CD4-positive, alpha-beta T cell (primary cell): ENCODE measurements at regions of chr2 and their contacts with region 1.

Region 1: DNA sequence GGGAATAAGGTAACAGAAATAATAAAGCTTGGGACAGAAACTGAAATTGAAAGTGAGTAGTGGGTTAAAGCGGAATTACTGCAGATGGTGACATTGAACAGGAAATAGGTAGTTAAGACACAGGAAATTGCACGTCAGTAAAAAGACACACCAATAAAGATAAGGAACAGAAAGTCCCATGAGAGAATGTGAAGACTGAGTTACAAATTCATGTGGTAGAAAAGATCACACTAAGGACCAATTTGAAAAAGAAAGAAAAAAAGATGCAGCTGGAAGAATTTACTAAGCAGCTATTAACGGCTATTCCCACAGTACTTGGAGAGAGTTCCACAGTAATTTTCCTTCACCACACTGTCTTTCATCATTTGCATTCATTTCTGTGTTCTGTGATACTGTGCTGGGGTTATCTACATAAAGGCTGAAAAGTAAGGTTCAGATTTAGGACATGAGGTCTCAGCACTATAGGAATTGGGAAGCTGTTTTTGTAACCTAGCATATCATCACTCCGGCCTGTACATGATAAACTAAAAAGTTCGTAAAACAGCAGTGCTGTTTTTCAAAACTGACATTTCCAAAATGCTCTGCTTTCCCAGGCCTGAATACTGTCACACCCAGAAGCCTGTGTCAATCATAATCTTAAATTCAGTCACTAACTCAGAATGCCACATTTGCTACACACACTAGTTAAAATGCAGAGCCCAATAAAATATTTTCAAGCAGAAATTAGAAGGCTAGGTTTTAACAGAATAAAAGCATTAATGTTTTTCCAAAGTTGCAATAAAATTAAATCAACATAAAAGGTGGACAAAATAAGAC is 42.9 kb downstream of the SRBD1 start:
- DNase-seq: peak in 4 of 14 experiments; percentile 7 to 91 (median 86)
- ATAC-seq: peak; percentile 97
- H3K4me3 ChIP-seq: peak overlapping the region; percentile 55
- H3K4me3 Mint-ChIP-seq: peak overlapping the region; percentile 87
- H3K27ac ChIP-seq: peak overlapping the region; percentile 58 to 85
- H3K27ac Mint-ChIP-seq: peak overlapping the region; percentile 87
- H3K4me1 ChIP-seq: peaks cover 12% of the 10 kb centered on the region
- H3K4me1 Mint-ChIP-seq: peaks cover 47% of the 10 kb centered on the region
- H3K27me3 ChIP-seq: no peaks in the 10 kb centered on the region
- H3K27me3 Mint-ChIP-seq: no peaks in the 10 kb centered on the region
- CTCF ChIP-seq: no peak

Region 2: GRCh38 chr2:45611020-45611737 is 43.0 kb after region 1 on chr2 and contains the start of gene SRBD1:
- CTCF ChIA-PET with region 1: no interaction called
- POLR2A ChIA-PET with region 1: interaction called, 14 read pairs
- intact Hi-C with region 1: loop called in 1 of 2 experiments (anchors 5 kb)
- DNase-seq: peak; percentile 61 to 94 (median 78)
- ATAC-seq: peak; percentile 75
- H3K4me3 ChIP-seq: peak within 1 kb of the TSS; percentile 78
- H3K4me3 Mint-ChIP-seq: peak within 1 kb of the TSS; percentile 99
- H3K27ac ChIP-seq: peak within 1 kb of the TSS; percentile 70 to 88
- H3K27ac Mint-ChIP-seq: peak within 1 kb of the TSS; percentile 95
- H3K4me1 ChIP-seq: peaks cover 8% of the 10 kb centered on the region
- H3K4me1 Mint-ChIP-seq: peaks cover 33% of the 10 kb centered on the region
- H3K27me3 ChIP-seq: no peaks in the 10 kb centered on the region
- H3K27me3 Mint-ChIP-seq: no peaks in the 10 kb centered on the region
- CTCF ChIP-seq: no peak
- total RNA-seq, gene SRBD1: 14.2 to 16.0 TPM

Region 3: GRCh38 chr2:46062637-46063412 is 494.6 kb after region 1 on chr2:
- CTCF ChIA-PET with region 1: no interaction called
- POLR2A ChIA-PET with region 1: no interaction called
- intact Hi-C with region 1: no loop called
- DNase-seq: peak; percentile 41 to 74 (median 57)
- ATAC-seq: peak; percentile 52
- H3K4me3 ChIP-seq: no peak overlapping the region
- H3K4me3 Mint-ChIP-seq: no peak overlapping the region
- H3K27ac ChIP-seq: no peak overlapping the region
- H3K27ac Mint-ChIP-seq: no peak overlapping the region
- H3K4me1 ChIP-seq: no peaks in the 10 kb centered on the region
- H3K4me1 Mint-ChIP-seq: no peaks in the 10 kb centered on the region
- H3K27me3 ChIP-seq: no peaks in the 10 kb centered on the region
- H3K27me3 Mint-ChIP-seq: no peaks in the 10 kb centered on the region
- CTCF ChIP-seq: peak; percentile 88

Region 4: DNA sequence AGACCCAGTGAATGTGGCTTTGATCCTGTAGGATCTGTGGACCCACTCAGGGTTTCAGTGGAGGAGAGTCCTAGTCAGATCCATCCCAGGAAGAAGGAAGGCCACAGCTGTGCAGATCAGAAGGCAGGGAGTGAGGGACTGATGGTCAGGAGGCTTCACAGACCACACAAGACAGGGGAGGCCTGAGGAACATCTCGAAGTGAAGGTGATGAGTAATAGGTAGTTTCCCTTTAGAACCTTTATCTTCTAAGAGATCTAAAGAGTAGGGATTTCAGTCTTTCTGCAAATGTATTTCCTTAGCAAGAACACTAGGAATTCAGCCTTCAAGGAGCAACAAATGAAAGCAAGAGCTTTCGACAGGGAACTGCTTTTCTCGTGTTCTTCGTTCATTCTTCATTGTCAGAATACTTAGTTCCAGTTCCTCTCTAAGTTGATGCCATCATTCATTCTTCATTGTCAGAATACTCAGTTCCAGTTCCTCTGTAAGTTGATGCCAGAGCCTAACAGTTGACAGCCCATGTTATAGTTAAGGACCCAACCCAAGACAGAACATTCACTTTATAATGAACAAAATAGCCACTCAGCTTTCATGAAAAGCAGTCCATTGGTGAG is 578.8 kb after region 1 on chr2:
- CTCF ChIA-PET with region 1: no interaction called
- POLR2A ChIA-PET with region 1: no interaction called
- intact Hi-C with region 1: no loop called
- DNase-seq: no peak
- ATAC-seq: no peak
- H3K4me3 ChIP-seq: no peak overlapping the region
- H3K4me3 Mint-ChIP-seq: no peak overlapping the region
- H3K27ac ChIP-seq: no peak overlapping the region
- H3K27ac Mint-ChIP-seq: no peak overlapping the region
- H3K4me1 ChIP-seq: no peaks in the 10 kb centered on the region
- H3K4me1 Mint-ChIP-seq: no peaks in the 10 kb centered on the region
- H3K27me3 ChIP-seq: no peaks in the 10 kb centered on the region
- H3K27me3 Mint-ChIP-seq: no peaks in the 10 kb centered on the region
- CTCF ChIP-seq: no peak